ENCODE measurements at regions of chr1 and their contacts with region 1.

Region 1: DNA sequence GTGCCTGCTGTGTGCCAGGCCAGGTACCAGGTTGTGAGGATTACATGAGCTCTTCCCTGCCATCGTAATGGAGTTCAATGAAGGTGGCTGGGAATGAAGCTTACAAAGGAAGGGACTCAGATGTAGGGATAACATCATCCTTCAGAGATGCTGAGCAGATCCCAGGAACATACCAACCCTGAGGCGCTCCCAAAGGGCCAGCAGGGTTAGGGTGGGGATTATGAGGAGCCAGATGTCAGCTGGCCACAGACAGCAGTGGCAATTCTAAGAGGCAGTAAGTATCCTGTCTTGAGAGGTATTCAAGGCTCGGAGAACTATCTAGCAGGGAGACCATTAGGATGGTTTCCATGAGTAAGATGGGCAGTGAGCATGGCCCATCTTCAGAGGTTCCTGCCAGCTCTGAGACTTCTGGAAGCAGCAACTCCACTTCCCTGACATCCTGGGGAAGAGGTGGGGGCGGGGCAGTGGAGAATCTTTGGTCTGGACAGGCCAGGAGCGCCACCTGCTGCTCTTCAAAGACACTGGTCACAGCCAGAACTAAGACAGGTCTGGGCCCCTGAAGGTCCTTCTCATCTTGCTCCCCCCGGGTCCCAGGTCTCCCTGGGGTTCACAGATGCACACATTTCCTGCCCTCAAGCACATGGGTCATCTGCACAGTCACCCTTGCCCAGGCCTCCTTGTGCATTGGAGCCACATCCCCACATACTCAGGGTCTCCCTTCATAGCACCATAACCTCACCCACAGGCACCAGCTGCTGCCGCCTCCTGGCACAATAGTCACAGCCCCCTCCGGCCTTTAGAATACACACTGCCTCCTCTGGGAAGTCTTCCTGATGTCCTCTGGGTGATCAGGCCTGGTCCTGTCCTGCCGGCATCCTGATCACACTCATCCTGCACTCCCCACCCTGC is 2.7 kb upstream of the SDC3 start:
- DNase-seq: peak; percentile 81
- CTCF ChIP-seq: peak; percentile 85

Region 2: DNA sequence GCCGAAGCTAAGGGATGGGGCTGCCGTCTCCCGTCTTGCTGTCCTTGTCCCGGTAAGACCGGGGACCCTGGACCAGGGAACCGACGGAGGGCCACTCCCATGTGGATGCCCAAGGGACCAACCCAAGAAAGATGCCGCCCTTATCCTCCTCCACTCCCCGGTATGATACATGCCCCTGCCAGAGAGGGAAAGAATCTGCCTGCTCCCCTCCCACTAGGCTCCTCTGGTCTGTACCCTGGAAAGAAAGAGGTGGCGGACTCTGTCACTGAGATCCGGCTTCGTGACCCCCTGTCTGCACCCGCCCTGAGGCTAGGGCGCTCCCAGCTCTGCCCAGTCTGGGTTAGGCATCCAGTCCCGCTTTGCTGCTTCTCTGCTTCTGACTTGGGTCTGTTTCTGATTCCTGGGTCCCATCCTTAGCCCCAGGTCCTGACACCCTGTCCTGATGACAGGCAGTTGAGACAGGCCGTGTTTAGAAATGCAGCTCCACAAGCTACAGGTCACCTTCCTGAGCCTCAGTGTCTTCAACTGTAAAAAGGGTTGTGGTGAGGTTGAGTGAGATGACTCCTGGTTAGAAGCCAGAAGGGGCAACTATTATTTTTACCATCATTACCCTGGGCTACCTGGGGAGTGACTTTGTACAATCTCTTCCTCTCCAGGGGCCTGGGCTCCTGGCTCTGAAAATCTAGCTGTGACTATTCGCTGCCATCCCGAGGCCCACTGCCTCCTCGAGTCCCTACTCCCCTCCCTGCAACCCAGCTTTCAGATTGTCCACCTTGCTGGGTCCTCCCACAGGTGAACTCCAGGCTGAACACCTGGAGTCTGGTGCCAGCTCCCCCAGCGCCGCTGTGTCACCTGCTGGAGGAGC is 191.7 kb before region 1 on chr1:
- in situ Hi-C with region 1: loop called (anchors 5 kb)
- DNase-seq: no peak
- CTCF ChIP-seq: no peak

Region 3: DNA sequence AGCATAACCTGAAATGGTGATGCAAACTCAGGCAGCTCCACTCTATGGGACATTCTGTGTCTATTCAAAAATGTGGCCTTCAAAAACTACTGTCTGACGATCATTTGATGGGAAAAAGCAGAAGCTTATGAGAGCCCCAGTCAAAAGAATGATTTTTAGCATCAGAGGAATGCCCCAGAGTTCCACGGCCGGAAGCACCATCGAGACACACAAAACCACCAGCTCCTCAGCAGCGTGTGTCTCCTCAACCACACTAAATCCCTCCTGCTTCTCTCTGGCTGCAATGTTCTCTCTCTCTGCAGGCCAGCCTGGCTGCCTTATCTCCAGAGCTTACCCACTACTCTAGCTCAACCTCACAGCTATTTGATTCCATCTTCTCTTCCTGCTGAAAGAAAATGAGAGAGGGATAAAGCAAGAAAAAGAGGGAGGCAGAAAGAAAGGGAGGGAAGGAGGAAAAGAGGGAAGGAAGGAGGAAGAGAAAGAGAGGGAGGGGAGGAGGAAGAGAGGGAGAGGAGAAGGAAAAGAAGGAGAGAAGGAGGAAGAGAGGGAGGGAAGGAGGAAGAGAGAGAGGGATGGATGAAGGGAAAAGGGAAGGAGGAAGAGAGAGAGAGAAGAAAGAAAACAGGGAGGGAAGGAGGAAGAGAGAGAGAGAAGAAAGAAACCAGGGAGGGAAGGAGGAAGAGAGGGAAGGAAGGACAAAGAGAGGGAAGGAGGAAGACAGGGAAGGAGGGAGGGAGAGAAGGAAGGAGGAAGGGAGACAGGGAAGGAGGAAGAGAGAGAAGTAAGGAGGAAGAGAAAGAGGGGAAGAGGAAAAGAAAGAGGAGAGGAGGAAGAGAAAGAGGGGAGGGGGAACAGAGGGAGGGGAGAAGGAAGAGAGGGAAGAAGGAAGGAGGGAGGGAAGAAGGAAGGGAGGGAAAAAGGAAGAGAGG is 120.2 kb before region 1 on chr1:
- in situ Hi-C with region 1: loop called (anchors 5 kb)
- DNase-seq: peak; percentile 54
- CTCF ChIP-seq: no peak

Measured in GM13977 (cell line).